ENCODE measurements at regions of chr2 and their contacts with region 1.

Region 1: DNA sequence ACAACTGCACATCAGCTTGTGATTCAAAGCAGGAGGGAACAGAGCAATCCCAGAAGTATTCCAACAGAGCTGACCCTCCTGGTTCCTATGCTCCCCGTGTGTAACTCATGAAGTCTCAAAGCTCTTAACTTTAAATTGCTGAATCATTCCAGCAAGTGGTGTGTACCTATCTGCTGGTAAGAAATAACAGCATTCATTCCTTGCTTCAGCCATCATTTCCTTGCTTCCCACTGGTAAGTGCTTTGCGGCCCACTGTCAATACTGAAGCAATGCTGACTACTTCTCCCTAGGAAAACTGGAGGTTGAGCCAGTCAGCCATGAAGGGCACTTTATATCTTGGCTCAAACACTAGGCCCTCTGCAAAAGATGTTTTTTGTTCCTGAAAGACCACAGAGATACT is 222.4 kb downstream of the EXOC6B start:
- DNase-seq: no peak

Region 2: GRCh38 chr2:71821856-71822255 is 781.6 kb before region 1 on chr2:
- intact Hi-C with region 1: loop called (anchors 5 kb)
- DNase-seq: no peak

Region 3: DNA sequence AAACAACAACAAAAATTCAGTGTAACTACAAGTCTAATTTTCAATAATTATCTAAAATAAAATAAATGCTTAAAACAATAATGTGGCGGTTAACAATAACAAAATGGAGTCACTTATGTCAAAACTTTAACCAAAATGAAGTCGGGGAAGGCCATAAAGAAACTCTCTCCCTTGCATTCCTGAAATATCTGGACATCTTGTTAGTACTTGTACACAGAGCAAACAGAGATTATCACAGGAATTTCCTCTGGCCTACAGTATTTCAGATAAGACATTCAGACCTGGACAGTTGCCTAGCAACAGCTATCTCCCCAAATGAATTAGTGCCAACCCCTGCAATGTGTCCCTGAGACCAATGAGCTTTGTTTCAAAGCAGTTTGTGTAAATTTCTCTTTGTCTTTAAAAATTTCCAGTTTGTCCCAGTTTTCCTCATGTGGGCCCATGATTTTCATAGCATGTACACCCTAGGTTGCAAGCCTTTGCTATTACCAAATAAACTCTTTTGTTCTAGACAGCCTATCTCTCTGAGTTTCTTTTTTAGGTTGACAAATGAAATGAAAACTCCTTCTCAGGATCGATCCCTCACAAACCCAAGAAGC is 153.8 kb after region 1 on chr2:
- intact Hi-C with region 1: no loop called
- DNase-seq: no peak

Region 4: GRCh38 chr2:72837171-72837570 is 233.7 kb after region 1 on chr2:
- intact Hi-C with region 1: no loop called
- DNase-seq: no peak